ENCODE measurements at regions of chr4 and their contacts with region 1.

Region 1: DNA sequence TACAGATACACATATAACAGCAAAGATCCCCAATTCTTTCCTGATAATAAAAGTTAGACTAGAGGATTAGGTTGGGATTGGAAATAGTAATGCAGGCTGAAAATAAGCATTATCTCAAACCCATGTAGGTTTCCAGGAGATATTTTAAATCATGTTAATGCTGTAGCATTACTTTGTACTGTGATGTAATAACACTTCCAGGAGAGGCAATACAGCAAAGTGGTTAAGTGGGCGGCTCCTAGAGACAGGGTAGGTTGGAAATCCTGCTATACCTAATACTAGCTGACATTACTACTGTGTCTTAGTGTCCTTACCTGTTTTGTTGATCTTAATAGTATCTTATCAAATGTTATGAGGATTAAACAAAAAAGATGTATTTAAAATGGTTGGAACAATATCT is 9.6 kb downstream of the PAICS start:
- DNase-seq: peak; percentile 17
- ATAC-seq: no peak
- H3K4me3 Mint-ChIP-seq: no peak overlapping the region
- H3K27ac Mint-ChIP-seq: peak overlapping the region; percentile 64
- H3K4me1 Mint-ChIP-seq: peaks cover 47% of the 10 kb centered on the region
- H3K27me3 Mint-ChIP-seq: no peaks in the 10 kb centered on the region
- CTCF ChIP-seq: no peak

Region 2: GRCh38 chr4:56460085-56460484 is 14.4 kb after region 1 on chr4:
- CTCF ChIA-PET with region 1: interaction called, 3 read pairs
- POLR2A ChIA-PET with region 1: interaction called, 56 read pairs
- intact Hi-C with region 1: no loop called
- DNase-seq: no peak
- ATAC-seq: no peak
- H3K4me3 Mint-ChIP-seq: no peak overlapping the region
- H3K27ac Mint-ChIP-seq: peak overlapping the region; percentile 85
- H3K4me1 Mint-ChIP-seq: peaks cover 37% of the 10 kb centered on the region
- H3K27me3 Mint-ChIP-seq: no peaks in the 10 kb centered on the region
- CTCF ChIP-seq: no peak

Region 3: DNA sequence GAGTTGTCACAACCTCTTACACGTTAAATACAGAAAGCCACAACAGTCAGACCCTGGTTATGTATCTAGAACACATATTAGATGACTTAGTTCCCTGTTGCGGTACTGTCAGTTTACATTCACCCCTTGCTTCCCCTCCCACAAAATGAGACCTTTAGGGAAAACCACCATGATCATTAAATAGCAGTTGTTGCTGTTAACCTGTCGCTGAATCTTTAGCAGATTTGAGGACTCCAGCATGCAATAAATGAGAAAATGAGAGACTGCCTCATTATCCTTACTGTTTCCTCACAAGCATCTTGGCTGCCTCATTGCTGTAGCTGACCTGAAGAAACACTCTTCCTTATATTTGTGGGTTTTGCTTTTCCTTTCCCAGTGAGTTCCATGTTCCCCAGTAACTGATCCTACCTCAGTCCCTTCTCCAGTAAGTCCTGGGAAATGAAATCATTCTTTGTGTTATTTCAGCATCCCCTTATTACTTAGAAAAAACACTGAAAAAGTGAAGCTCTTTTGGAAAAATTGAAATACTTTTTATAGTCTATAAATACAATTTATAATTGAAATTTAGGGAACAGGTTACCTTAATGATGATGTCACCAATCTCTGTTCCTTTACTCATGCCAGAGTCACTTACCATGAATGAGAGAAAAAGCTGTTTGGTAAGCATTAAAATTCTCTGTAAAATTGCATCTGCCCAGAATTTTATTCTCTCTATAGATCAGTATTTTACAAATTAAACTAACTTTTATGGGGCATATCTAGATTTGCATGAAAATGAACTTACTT is 157.8 kb after region 1 on chr4:
- CTCF ChIA-PET with region 1: no interaction called
- POLR2A ChIA-PET with region 1: no interaction called
- intact Hi-C with region 1: no loop called
- DNase-seq: no peak
- ATAC-seq: no peak
- H3K4me3 Mint-ChIP-seq: no peak overlapping the region
- H3K27ac Mint-ChIP-seq: no peak overlapping the region
- H3K4me1 Mint-ChIP-seq: no peaks in the 10 kb centered on the region
- H3K27me3 Mint-ChIP-seq: no peaks in the 10 kb centered on the region
- CTCF ChIP-seq: no peak

Measured in activated CD8-positive, alpha-beta T cell treated with anti-CD3 and anti-CD28 coated beads for 36 hours (primary cell).